Psoas muscle (tissue), 8 donors: ENCODE measurements at regions of chr3 and their contacts with region 1.

Region 1: DNA sequence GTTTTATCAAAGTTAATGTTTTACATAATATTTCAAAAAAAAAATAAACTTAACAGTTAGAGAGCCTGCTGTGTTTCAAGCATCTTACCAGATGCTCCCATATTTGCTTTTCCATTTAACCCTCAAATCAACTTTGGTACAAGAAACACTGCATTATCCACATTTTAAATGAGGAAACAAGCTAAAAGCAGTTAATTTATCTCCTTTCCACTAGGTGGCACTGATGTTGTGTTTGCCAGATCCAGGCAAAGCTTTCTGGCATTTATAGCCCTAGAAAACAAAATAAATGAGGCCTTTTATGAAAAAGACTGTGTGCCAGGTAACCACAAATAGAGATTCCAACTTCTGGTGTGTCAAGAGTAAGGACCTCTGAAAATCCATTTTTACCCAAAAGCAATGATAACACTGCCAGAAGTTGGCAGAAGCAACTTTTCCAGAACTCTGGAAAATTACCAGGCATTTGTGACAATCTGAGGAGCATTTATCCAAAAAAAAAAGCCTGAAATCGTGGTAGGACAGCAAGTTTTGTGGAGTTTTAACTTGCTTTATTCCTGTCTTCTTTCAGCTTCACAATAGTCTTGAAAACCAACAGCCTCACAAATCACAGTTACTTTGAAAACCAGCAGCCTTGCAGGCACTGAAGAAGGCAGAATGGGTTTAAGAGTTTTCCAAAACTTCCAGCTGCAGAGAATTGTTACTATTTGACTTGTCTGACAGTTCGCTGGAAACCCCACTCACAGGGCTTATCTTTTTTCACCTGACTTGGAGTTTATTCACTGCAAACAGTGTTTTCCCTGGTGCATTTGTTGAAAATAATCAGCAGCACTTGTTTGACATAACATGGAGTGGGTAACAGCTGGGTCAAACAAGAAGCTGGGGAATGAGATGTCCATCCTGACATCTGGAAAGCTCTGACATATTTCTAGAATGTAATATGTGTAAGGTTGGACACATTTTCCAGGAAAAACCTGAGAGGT is 9.2 kb downstream of the FAM162A start:
- DNase-seq: no peak
- ATAC-seq: peak in 3 of 4 donors; percentile 43 to 76 (median 48)
- H3K4me3 ChIP-seq: no peak overlapping the region
- H3K27ac ChIP-seq: no peak overlapping the region
- H3K4me1 ChIP-seq: no peaks in the 10 kb centered on the region
- H3K27me3 ChIP-seq: no peaks in the 10 kb centered on the region
- CTCF ChIP-seq: peak; percentile 83

Region 2: GRCh38 chr3:122520861-122521260 is 127.7 kb after region 1 on chr3:
- intact Hi-C with region 1: no loop called
- DNase-seq: no peak
- ATAC-seq: no peak
- H3K4me3 ChIP-seq: no peak overlapping the region
- H3K27ac ChIP-seq: no peak overlapping the region
- H3K4me1 ChIP-seq: no peaks in the 10 kb centered on the region
- H3K27me3 ChIP-seq: no peaks in the 10 kb centered on the region
- CTCF ChIP-seq: no peak

Region 3: GRCh38 chr3:122679085-122679881 is 286.1 kb after region 1 on chr3:
- intact Hi-C with region 1: loop called in 1 of 2 experiments (anchors 2 kb)
- DNase-seq: peak; percentile 82 to 84
- ATAC-seq: peak; percentile 70 to 88 (median 78)
- H3K4me3 ChIP-seq: peak overlapping the region; percentile 78
- H3K27ac ChIP-seq: peak overlapping the region; percentile 74
- H3K4me1 ChIP-seq: no peaks in the 10 kb centered on the region
- H3K27me3 ChIP-seq: no peaks in the 10 kb centered on the region
- CTCF ChIP-seq: peak; percentile 76